ENCODE measurements at regions of chr3 and their contacts with region 1.

Region 1: DNA sequence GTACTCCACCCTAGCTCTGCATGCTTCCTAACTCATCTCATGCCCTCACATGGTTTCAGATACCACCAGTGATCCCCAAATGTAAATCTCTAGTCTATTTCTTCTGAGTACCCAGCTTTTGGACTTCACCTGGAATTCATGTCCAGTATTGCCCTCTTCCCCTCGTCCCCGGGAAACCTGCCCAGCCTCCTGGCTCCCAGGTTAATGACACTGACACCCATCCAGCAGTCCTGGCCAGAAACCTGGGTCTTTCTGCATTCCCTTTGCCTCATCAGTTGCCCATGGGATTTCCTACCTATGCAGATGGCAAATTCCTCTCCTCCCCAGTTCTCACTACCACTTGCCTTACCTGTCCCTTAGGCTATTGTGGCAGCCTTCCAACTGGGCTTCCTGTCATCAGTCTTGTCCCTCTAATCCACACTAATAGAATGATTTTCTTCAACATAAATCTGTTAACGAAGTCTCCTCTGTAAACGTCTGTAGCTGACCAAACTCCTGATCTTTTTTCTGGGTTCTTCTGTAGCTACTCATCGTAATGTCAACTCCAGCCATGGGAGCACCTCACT is 15.3 kb upstream of the MYLK start:
- DNase-seq: peak in 1 of 2 experiments; percentile 46
- H3K4me3 ChIP-seq: no peak overlapping the region
- H3K27ac ChIP-seq: no peak overlapping the region
- H3K4me1 ChIP-seq: no peaks in the 10 kb centered on the region
- H3K27me3 ChIP-seq: no peaks in the 10 kb centered on the region
- CTCF ChIP-seq: no peak

Region 2: GRCh38 chr3:123361071-123361470 is 538.3 kb before region 1 on chr3:
- CTCF ChIA-PET with region 1: no interaction called
- POLR2A ChIA-PET with region 1: no interaction called
- intact Hi-C with region 1: no loop called
- DNase-seq: no peak
- H3K4me3 ChIP-seq: no peak overlapping the region
- H3K27ac ChIP-seq: no peak overlapping the region
- H3K4me1 ChIP-seq: no peaks in the 10 kb centered on the region
- H3K27me3 ChIP-seq: no peaks in the 10 kb centered on the region
- CTCF ChIP-seq: no peak

Region 3: GRCh38 chr3:123884203-123884831 is 15.1 kb before region 1 on chr3 and contains the start of gene MYLK:
- CTCF ChIA-PET with region 1: no interaction called
- POLR2A ChIA-PET with region 1: interaction called, 10 read pairs
- intact Hi-C with region 1: no loop called
- DNase-seq: peak in 1 of 2 experiments; percentile 23
- H3K4me3 ChIP-seq: no peak within 1 kb of the TSS
- H3K27ac ChIP-seq: no peak within 1 kb of the TSS
- H3K4me1 ChIP-seq: no peaks in the 10 kb centered on the region
- H3K27me3 ChIP-seq: no peaks in the 10 kb centered on the region
- CTCF ChIP-seq: no peak
- total RNA-seq, gene MYLK: 0.72 and 1.2 TPM in 2 replicates

Measured in PC-9 (cell line).